BJ (cell line): ENCODE measurements at regions of chr9 and their contacts with region 1.

Region 1: GRCh38 chr9:112050544-112051475 is 124.3 kb downstream of the SUSD1 start:
- DNase-seq: peak; percentile 93
- H3K4me3 ChIP-seq: no peak overlapping the region
- H3K27me3 ChIP-seq: no peaks in the 10 kb centered on the region
- CTCF ChIP-seq: no peak

Region 2: GRCh38 chr9:112341741-112342140 is 290.9 kb after region 1 on chr9:
- CTCF ChIA-PET with region 1: no interaction called
- POLR2A ChIA-PET with region 1: no interaction called
- DNase-seq: no peak
- H3K4me3 ChIP-seq: no peak overlapping the region
- H3K27me3 ChIP-seq: no peaks in the 10 kb centered on the region
- CTCF ChIP-seq: no peak

Region 3: DNA sequence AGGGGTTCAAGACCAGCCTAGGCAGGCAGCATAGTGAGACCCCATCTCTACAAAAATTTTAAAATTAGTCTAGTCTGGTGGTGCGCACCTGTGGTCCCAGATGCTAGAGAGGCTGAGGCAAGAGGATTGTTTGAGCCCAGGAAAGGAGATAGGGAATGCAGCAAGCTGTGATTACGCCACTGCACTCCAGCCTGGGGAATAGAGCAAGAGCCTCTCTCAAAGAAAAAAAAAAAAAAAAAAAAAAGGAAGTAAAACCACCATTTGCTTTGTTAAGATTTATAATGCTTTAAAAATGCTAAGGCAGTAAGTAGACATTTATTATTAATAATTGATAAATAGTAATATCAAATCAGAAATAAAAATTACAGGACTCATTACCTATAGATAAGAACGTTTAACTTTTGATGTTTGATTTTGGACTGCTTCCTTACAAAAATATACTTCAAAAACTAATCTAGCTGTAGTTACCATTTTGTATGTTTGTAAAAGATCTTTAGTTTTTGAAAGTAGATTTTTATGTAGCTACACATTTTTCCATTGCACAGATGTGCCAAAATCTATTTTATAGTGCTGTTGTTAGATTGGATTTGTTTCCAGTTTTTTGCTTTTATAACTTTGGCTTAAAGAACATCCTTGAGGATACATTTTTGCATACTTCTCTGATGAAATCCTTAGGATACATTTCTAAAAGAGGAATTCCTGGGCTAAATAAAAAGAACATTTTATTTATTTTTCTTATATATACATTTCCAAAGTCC is 580.7 kb after region 1 on chr9:
- CTCF ChIA-PET with region 1: no interaction called
- POLR2A ChIA-PET with region 1: interaction called, 12 read pairs
- DNase-seq: no peak
- H3K4me3 ChIP-seq: no peak overlapping the region
- H3K27me3 ChIP-seq: no peaks in the 10 kb centered on the region
- CTCF ChIP-seq: no peak